PC-3 (cell line): ENCODE measurements at regions of chr19 and their contacts with region 1.

Region 1: DNA sequence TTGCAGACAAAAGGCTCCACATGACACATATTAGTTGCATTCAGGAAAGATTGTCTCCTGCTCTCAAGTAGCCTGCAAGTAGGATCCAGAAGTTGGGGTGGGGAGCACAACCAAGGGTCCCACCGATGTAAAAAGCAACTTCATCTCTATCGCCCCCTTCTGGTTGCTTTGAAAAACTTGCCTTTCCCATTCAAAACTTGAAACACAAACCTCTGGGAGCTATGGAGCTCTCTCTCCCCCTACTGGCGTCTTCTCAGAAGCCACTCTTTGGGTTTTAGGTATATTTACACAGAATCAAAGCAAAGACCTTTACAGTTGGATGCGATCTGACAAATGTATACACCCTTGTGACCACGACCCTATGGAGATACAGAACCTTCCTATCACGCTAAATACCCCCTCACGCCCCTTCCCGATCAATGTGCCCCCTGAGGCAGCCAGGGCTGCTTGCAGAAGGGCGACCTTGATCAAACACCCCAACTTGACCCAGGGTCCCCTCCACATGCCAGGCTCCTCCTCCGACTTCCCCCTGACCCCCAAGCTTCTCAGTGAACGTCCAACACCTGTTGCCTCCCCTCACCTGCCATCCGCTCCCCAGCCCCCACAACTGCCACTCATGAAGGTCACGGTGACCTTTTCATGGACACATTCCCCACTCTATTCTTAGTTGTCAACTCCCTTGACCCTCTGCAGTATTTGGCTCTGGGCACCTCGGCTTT is 10.1 kb downstream of the NOSIP start:
- DNase-seq: peak; percentile 92
- ATAC-seq: peak; percentile 75
- H3K4me3 ChIP-seq: no peak overlapping the region
- H3K27ac ChIP-seq: no peak overlapping the region
- H3K4me1 ChIP-seq: peaks cover 16% of the 10 kb centered on the region; the same call in 1 of the 2 replicates
- H3K27me3 ChIP-seq: no peaks in the 10 kb centered on the region
- CTCF ChIP-seq: peak; percentile 99

Region 2: DNA sequence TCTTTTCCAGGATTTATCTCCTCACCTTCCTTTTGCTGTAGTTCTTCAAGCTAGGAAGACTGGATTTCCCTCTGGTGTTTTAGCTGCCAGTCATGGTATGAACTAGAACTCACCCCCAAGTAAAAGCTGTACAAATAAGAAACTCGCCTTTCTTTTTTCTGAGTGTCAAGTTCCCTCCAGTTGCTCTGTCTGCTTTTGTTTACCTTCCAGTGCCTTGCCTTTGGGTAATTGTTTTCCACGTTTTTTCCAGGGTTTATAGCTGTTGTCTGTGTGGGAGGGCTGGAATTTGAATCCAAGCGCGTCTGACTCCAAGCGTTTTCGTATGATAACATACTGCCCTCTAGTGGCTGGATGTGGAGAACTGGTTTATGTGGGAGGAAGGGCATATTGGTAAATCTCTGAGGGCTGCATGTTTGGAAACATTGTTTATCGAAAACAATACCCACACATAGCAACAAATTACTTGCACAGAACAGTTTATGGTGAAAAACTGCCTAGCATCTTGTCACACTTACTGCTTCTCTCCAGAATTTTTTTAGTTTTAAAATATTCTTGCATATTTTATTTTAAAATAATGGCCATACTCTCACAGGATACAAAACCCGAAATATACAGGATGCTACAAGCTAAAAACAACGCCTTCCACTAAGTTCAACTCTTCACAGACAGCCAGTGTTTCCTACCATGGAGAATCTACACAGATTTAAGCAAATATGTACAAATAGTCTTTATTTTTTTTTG is 23.3 kb before region 1 on chr19:
- CTCF ChIA-PET with region 1: interaction called, 12 read pairs
- POLR2A ChIA-PET with region 1: no interaction called
- intact Hi-C with region 1: loop called (anchors 2 kb)
- DNase-seq: peak; percentile 99
- ATAC-seq: peak; percentile 90
- H3K4me3 ChIP-seq: peak overlapping the region; percentile 31
- H3K27ac ChIP-seq: peak overlapping the region; percentile 42
- H3K4me1 ChIP-seq: peaks cover 8% of the 10 kb centered on the region; the same call in 1 of the 2 replicates
- H3K27me3 ChIP-seq: no peaks in the 10 kb centered on the region
- CTCF ChIP-seq: peak; percentile 97

Region 3: GRCh38 chr19:49645592-49645991 is 75.3 kb after region 1 on chr19:
- CTCF ChIA-PET with region 1: no interaction called
- POLR2A ChIA-PET with region 1: no interaction called
- intact Hi-C with region 1: no loop called
- DNase-seq: no peak
- ATAC-seq: no peak
- H3K4me3 ChIP-seq: no peak overlapping the region
- H3K27ac ChIP-seq: no peak overlapping the region
- H3K4me1 ChIP-seq: peaks cover 29% of the 10 kb centered on the region
- H3K27me3 ChIP-seq: no peaks in the 10 kb centered on the region
- CTCF ChIP-seq: no peak